Transverse colon (tissue), 4 donors: ENCODE measurements at regions of chr17 and their contacts with region 1.

Region 1: DNA sequence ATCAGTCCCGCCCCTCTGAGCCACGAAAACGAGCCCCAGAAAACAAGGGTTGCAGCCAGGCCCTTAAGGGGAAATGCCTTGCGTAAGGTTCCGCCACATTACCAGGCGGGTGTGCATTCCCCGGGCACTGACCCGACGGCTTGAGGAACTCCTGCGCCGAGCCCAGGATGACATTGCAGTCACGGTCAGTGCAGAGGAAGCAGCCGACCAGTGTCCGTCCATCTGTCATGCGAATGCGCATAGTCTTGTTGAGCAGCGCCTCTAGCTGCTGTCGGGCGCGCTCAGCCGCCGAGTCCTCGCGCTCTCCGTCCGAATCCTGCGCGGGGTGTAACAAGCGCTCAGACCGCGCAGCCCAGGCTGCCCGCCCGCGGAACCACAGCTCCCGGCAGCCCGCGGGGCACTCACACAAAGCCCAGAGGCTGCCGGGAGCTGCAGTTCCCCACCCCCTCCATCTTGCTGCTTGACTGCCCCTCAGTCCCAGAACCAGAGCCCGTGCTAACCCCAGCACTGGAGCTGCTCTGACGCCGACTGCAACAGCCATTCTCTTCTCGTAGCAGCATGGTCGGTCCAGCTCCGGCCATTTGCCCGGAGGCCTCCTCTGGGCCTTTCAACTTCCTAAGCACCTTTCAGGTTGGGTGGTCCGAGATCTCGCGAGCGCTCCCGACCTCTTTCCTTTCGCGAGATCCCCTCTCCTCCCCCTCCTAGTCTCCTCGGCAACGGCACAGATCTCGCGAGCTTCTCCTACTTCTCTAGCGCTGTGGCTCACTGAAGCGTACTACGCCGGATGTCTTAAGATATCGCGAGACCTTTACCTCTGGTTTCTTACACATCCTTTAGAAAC is at the start of gene NAA38:
- DNase-seq: peak; percentile 97
- H3K4me3 ChIP-seq: peak within 1 kb of the TSS; percentile 50 to 62 (median 53)
- H3K27ac ChIP-seq: peak within 1 kb of the TSS; percentile 90 to 97 (median 94)
- H3K4me1 ChIP-seq: peaks cover 23 to 36% (median 28%) of the 10 kb centered on the region in 4 donors
- H3K27me3 ChIP-seq: no peaks in the 10 kb centered on the region
- CTCF ChIP-seq: peak; percentile 17 to 47 (median 32)
- EP300 ChIP-seq: no peak
- POLR2A ChIP-seq: peak; percentile 73
- total RNA-seq, gene NAA38: 59.8 to 95.3 (median 86.5) TPM

Region 2: GRCh38 chr17:7745748-7746470 is 111.2 kb before region 1 on chr17:
- in situ Hi-C with region 1: no loop called
- intact Hi-C with region 1: loop called (anchors 10 kb)
- DNase-seq: no peak
- H3K4me3 ChIP-seq: no peak overlapping the region
- H3K27ac ChIP-seq: no peak overlapping the region
- H3K4me1 ChIP-seq: peaks cover 0 to 16% (median 7%) of the 10 kb centered on the region in 4 donors
- H3K27me3 ChIP-seq: peaks cover under 1% of the 10 kb centered on the region
- CTCF ChIP-seq: no peak
- EP300 ChIP-seq: no peak
- POLR2A ChIP-seq: no peak

Region 3: GRCh38 chr17:7844292-7845154 is 12.6 kb before region 1 on chr17:
- in situ Hi-C with region 1: no loop called
- intact Hi-C with region 1: loop called (anchors 2 kb)
- DNase-seq: peak; percentile 94
- H3K4me3 ChIP-seq: peak overlapping the region; percentile 45 to 78 (median 59)
- H3K27ac ChIP-seq: peak overlapping the region; percentile 97 to 99 (median 99)
- H3K4me1 ChIP-seq: peaks cover 22 to 53% (median 28%) of the 10 kb centered on the region in 4 donors
- H3K27me3 ChIP-seq: no peaks in the 10 kb centered on the region
- CTCF ChIP-seq: no peak
- EP300 ChIP-seq: no peak
- POLR2A ChIP-seq: peak; percentile 75

Region 4: DNA sequence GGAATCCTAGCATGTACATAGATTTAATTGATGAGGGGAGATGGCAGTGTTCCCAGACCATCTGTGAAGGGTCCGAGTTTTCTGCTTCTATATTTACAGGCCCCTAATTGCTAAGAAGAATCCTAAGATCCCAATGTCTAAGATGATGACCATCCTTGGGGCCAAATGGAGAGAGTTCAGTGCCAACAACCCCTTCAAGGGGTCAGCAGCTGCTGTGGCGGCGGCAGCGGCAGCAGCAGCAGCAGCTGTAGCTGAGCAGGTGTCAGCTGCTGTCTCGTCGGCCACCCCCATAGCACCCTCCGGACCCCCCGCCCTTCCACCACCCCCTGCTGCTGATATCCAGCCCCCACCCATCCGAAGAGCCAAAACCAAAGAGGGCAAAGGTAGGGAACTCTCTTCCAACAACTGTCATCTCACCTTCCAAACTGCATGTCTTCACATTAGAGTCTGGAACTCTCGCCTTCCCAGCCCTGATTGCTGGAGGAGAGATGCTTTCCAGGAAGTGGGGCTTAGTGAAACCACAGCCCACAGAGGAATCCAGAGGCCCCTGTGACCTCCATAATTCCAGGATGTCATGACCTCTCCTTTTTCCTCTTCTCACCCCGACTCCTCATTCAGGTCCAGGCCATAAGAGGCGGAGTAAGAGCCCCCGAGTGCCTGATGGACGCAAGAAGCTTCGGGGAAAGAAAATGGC is 36.2 kb after region 1 on chr17:
- in situ Hi-C with region 1: no loop called
- intact Hi-C with region 1: loop called (anchors 5 kb)
- DNase-seq: no peak
- H3K4me3 ChIP-seq: no peak overlapping the region
- H3K27ac ChIP-seq: no peak overlapping the region
- H3K4me1 ChIP-seq: peaks cover 18 to 19% (median 19%) of the 10 kb centered on the region in 4 donors
- H3K27me3 ChIP-seq: no peaks in the 10 kb centered on the region
- CTCF ChIP-seq: no peak
- EP300 ChIP-seq: no peak
- POLR2A ChIP-seq: no peak